Esophagus muscularis mucosa (tissue), 4 donors: ENCODE measurements at regions of chr3 and their contacts with region 1.

Region 1: DNA sequence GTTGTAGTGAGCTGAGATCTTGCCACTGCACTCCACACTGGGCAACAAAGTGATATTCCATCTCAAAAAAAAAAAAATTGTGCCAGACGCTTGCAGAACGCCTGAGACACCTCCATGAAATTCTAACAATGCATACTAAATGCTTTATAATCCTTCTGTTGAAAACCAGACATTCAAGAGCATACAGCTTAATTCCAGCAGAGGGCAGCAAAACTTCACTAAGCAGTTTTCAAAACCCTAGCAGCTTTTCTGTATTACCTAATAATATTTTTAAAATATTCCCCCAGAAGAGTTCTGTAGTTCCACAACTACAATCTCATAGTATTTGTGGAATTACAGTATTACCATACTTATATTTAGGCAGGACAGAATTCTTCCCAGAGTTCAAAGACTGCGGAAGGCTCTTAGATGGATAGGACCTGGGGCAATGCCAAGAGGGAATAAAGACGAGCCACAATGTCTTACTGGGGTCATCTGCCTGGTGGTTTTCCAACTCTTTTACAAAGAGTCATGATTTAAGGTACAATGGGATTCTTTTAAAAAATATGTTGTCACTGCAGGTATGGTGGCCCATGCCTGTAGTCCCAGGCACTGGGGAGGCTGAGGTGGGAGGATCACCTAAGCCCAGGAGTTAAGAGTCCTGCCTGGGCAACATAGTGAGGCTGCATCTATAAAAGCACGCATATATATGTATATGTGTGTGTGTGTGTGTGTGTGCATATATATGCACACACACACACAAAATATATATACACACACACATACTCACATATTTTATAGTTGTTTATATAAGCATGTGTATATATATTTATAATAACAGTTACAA is 19.6 kb upstream of the TASOR start:
- DNase-seq: no peak
- H3K4me3 ChIP-seq: no peak overlapping the region
- H3K27ac ChIP-seq: no peak overlapping the region
- H3K4me1 ChIP-seq: peaks cover 3 to 8% (median 7%) of the 10 kb centered on the region in 4 donors
- H3K27me3 ChIP-seq: peaks cover 0 to 5% (median 0%) of the 10 kb centered on the region in 4 donors
- CTCF ChIP-seq: peak; percentile 88 to 95 (median 89)
- EP300 ChIP-seq: no peak
- POLR2A ChIP-seq: no peak

Region 2: DNA sequence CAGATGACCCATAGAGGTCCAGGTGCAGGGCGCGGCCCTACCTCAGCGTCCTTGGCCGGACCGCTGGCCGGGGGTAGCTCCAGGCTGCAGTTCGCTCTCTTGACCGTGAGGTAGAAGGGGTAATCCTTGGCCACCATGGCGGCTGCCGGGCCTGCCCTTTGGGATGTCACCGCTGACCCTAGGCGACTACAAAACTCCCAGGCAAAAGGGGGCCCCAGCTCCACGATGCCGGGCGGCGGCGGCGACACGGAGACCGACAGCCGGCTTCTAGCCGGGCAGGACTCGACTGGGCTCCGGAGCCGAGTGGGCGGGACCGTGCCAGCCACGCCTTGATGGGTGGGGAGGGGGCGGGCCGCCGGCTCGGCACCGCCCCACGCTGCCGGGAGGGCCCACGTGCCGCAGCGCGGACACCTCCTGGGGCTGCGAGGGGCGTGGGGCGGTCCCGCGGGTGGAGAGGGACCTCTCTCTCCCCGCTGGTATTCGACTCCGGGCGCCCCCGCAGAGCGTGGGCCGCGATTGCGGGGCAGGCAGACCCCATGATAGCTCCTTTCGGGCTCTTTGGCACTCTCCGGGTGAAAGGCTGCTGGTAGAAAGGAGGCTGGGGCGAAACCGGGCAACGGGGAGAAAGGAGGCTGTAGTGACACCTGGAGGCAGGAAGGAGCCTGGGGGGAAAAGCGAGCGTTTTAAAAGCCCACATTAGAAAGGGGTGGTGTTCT is 99.1 kb after region 1 on chr3 and contains the start of gene ARHGEF3:
- intact Hi-C with region 1: loop called (anchors 2 kb)
- DNase-seq: no peak
- H3K4me3 ChIP-seq: peak within 1 kb of the TSS; percentile 68 to 81 (median 73)
- H3K27ac ChIP-seq: peak within 1 kb of the TSS; percentile 50 to 71 (median 62)
- H3K4me1 ChIP-seq: peaks cover 29 to 55% (median 45%) of the 10 kb centered on the region in 4 donors
- H3K27me3 ChIP-seq: no peaks in the 10 kb centered on the region
- CTCF ChIP-seq: peak; percentile 33 to 39 (median 36)
- EP300 ChIP-seq: no peak
- POLR2A ChIP-seq: peak; percentile 48
- total RNA-seq, gene ARHGEF3: 9.0 to 14.7 (median 11.7) TPM

Region 3: DNA sequence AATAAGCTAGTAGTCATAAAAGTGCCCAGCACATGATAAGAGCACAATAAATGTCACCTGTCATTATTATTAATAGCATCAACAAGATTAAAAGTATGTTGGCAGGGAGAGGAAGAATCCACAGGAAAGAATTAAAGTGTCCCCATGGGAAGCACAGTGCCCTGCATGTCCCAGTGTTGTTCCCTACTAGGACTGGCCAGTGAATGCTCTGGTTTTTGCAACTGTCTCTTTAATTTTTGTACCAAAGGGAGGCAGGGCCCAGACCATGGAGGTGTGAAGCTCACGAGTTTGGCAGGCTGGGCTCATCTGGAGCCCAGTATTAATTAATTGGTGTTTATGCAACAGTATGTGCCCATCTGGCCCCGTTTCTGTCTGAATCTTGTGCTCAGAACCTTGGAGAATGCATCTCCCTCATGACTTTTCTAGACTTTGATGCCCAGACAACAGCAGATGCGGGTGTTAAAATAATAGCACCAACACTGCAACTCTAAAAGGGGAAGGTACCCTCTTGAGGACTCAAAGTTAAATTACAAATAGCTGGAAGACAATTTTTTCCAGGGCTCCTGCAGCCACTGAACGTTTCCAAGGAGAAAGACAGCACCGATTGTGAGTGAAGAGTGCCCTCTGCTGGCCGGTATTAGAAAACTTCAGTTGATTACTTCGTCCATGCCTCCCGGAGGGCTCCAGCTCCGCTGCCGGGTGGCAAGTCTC is 285.9 kb after region 1 on chr3:
- intact Hi-C with region 1: loop called (anchors 2 kb)
- DNase-seq: no peak
- H3K4me3 ChIP-seq: peak overlapping the region in 3 of 4 donors; percentile 8 to 15 (median 9)
- H3K27ac ChIP-seq: peak overlapping the region in 3 of 4 donors; percentile 29 to 71 (median 53)
- H3K4me1 ChIP-seq: peaks cover 15 to 44% (median 30%) of the 10 kb centered on the region in 4 donors
- H3K27me3 ChIP-seq: no peaks in the 10 kb centered on the region
- CTCF ChIP-seq: peak; percentile 72 to 88 (median 79)
- EP300 ChIP-seq: no peak
- POLR2A ChIP-seq: no peak

Region 4: DNA sequence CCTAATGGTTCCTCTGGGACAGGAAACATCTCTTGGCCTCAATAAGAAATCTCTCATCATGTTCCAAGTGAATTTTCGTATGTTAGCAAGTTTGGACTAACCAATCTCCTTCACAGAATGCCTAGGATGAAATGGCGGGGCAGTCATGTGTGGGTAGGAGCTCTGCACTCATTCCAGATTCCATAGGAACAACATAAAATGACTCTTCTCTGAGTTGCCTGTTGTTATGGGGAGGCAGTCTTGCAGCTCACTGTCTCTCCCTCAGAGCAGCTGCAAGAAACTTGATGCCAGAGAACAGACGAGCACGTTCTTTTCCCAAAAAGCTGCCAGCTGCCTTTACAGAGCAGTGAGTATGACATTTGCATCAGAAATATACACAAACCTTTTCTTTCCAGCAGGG is 391.9 kb after region 1 on chr3:
- intact Hi-C with region 1: loop called (anchors 10 kb)
- DNase-seq: no peak
- H3K4me3 ChIP-seq: no peak overlapping the region
- H3K27ac ChIP-seq: peak overlapping the region in 2 of 4 donors; percentile 3 to 6
- H3K4me1 ChIP-seq: peaks cover 0 to 12% (median 4%) of the 10 kb centered on the region in 4 donors
- H3K27me3 ChIP-seq: no peaks in the 10 kb centered on the region
- CTCF ChIP-seq: no peak
- EP300 ChIP-seq: no peak
- POLR2A ChIP-seq: no peak